Ovary (tissue), 10 donors: ENCODE measurements at regions of chr20 and their contacts with region 1.

Region 1: DNA sequence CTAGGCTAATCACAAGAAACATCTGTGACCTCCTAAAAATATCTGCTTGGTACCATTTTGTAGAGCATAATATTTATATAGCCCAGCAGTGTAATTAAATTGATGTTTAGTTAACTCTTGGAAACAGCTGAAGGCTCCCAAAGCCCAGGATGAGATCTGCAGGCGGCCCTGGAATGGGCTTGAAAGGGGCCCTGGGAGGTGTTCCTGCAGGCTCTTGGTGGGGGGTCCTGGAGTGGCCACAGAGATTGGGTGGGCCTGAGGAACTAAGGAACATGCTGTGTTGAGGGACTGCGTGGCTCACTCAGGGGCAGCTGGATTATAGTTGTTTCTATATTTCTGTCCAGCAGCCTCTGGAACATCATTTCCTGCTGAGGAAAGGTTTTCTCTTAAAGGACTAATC is 9.2 kb downstream of the SCP2D1 start:
- DNase-seq: no peak
- H3K4me3 ChIP-seq: no peak overlapping the region
- H3K27ac ChIP-seq: no peak overlapping the region
- H3K4me1 ChIP-seq: no peaks in the 10 kb centered on the region
- H3K27me3 ChIP-seq: no peaks in the 10 kb centered on the region
- CTCF ChIP-seq: no peak
- EP300 ChIP-seq: no peak
- POLR2A ChIP-seq: no peak

Region 2: GRCh38 chr20:18956900-18957602 is 134.2 kb after region 1 on chr20:
- intact Hi-C with region 1: no loop called
- DNase-seq: no peak
- H3K4me3 ChIP-seq: no peak overlapping the region
- H3K27ac ChIP-seq: no peak overlapping the region
- H3K4me1 ChIP-seq: no peaks in the 10 kb centered on the region
- H3K27me3 ChIP-seq: no peaks in the 10 kb centered on the region
- CTCF ChIP-seq: no peak
- EP300 ChIP-seq: no peak
- POLR2A ChIP-seq: no peak

Region 3: DNA sequence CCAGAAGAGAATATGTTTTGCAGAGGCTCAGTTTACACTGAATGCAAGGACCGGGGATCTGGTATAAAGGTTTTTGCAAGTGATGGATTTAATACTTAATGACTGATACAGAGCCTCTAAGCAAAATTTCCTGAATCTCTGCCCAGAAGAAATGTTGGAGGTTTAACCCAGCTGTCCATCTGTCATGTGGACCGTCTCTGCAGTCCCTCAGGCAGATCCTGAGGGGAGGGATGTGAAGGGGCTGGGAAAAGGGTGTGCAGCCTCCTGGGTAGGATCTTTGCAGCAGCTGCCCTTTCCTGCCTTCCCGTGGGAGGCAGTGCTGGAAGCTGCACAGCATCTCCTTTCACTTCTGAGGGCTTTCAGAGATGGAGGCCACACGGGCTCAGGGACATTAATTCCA is 596.6 kb after region 1 on chr20:
- intact Hi-C with region 1: loop called in 1 of 4 experiments (anchors 10 kb)
- DNase-seq: no peak
- H3K4me3 ChIP-seq: no peak overlapping the region
- H3K27ac ChIP-seq: no peak overlapping the region
- H3K4me1 ChIP-seq: no peaks in the 10 kb centered on the region
- H3K27me3 ChIP-seq: no peaks in the 10 kb centered on the region
- CTCF ChIP-seq: no peak
- EP300 ChIP-seq: no peak
- POLR2A ChIP-seq: no peak